ENCODE measurements at regions of chr16 and their contacts with region 1.

Region 1: DNA sequence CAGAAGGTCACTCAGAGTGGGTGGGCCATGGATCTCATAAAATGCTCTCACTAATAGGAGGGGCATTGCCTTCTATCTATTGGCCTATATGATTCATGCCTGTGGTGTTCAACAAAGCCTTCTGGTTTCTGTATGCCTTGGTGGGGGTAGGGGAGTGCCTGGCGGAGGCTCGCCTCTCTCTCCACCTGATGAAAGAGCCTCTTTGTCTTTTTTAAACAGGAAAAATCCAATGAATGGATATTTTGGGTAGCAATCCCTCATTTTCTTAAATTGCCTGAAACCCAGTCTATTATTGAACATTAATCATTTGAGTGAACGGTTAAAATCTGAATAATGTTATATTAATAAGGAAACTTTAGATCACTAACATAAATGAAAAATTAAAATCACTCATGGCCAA is 90.6 kb downstream of the TOX3 start:
- DNase-seq: peak; percentile 48 to 66
- H3K4me3 ChIP-seq: no peak overlapping the region
- H3K4me3 Mint-ChIP-seq: no peak overlapping the region
- H3K27ac Mint-ChIP-seq: peak overlapping the region; percentile 42
- H3K4me1 ChIP-seq: peaks cover 15% of the 10 kb centered on the region
- H3K4me1 Mint-ChIP-seq: peaks cover 8% of the 10 kb centered on the region
- H3K27me3 ChIP-seq: no peaks in the 10 kb centered on the region
- H3K27me3 Mint-ChIP-seq: no peaks in the 10 kb centered on the region
- CTCF ChIP-seq: no peak

Region 2: DNA sequence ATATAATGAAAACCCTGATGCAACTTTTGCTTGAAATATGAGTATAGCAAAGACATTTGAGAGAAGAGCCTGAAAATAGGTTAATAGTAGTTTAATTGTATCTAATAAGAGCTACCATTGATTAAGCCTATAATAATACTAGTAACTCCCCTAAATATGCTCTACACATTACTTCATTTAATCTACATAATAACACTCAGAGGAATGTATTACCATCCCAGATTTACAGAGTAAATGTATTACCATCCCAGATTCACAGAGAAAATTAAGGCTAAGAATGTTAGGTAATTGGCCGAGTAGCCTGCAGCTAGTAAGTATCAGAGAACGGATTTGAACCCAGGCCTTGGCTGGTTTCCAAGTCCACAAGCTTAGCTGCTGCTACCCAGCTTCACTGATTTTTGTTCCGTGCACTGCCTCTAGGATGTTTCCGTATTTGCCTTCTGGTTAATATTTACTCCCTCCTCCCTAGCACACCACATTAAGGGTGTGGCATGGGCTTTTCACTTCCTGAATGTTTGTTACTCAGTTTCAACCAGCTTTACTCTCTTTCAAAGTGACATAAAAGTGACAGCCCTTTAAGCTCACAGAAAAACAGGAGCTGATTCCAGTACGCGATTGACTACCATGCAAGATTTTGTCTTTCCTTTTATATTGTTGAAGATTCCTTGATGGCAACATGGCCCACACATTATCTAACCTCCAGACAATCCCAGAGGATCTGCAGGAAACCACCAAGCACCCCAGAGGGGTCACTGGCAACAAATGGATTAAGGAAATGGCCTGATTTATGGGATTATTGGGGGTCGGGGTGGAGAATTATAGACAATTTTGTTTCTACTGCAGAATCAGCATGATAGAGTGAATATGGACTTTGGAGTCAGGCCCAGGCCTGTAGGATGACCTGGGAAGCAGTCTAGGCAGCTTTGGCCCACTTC is 117.3 kb after region 1 on chr16:
- CTCF ChIA-PET with region 1: no interaction called
- POLR2A ChIA-PET with region 1: no interaction called
- intact Hi-C with region 1: loop called (anchors 10 kb)
- DNase-seq: peak; percentile 65 to 68
- H3K4me3 ChIP-seq: no peak overlapping the region
- H3K4me3 Mint-ChIP-seq: no peak overlapping the region
- H3K27ac Mint-ChIP-seq: peak overlapping the region; percentile 72
- H3K4me1 ChIP-seq: peaks cover 30% of the 10 kb centered on the region
- H3K4me1 Mint-ChIP-seq: peaks cover 20% of the 10 kb centered on the region
- H3K27me3 ChIP-seq: no peaks in the 10 kb centered on the region
- H3K27me3 Mint-ChIP-seq: no peaks in the 10 kb centered on the region
- CTCF ChIP-seq: peak in 1 of 2 experiments; percentile 14

Measured in Caco-2 (cell line).